ENCODE measurements at regions of chr6 and their contacts with region 1.

Region 1: GRCh38 chr6:135506270-135506997 is 8.9 kb upstream of the AHI1 start:
- DNase-seq: peak in 4 of 14 experiments; percentile 10 to 71 (median 66)
- ATAC-seq: peak; percentile 84
- H3K4me3 ChIP-seq: no peak overlapping the region
- H3K4me3 Mint-ChIP-seq: no peak overlapping the region
- H3K27ac ChIP-seq: no peak overlapping the region
- H3K27ac Mint-ChIP-seq: no peak overlapping the region
- H3K4me1 ChIP-seq: no peaks in the 10 kb centered on the region
- H3K4me1 Mint-ChIP-seq: no peaks in the 10 kb centered on the region
- H3K27me3 ChIP-seq: no peaks in the 10 kb centered on the region
- H3K27me3 Mint-ChIP-seq: no peaks in the 10 kb centered on the region
- CTCF ChIP-seq: peak; percentile 79

Region 2: GRCh38 chr6:135451693-135452092 is 54.7 kb before region 1 on chr6:
- CTCF ChIA-PET with region 1: no interaction called
- POLR2A ChIA-PET with region 1: no interaction called
- intact Hi-C with region 1: loop called in 1 of 2 experiments (anchors 5 kb)
- DNase-seq: peak in 3 of 14 experiments; percentile 42 to 66 (median 64)
- ATAC-seq: peak; percentile 54
- H3K4me3 ChIP-seq: no peak overlapping the region
- H3K4me3 Mint-ChIP-seq: no peak overlapping the region
- H3K27ac ChIP-seq: no peak overlapping the region
- H3K27ac Mint-ChIP-seq: no peak overlapping the region
- H3K4me1 ChIP-seq: no peaks in the 10 kb centered on the region
- H3K4me1 Mint-ChIP-seq: no peaks in the 10 kb centered on the region
- H3K27me3 ChIP-seq: no peaks in the 10 kb centered on the region
- H3K27me3 Mint-ChIP-seq: no peaks in the 10 kb centered on the region
- CTCF ChIP-seq: peak; percentile 86

Region 3: DNA sequence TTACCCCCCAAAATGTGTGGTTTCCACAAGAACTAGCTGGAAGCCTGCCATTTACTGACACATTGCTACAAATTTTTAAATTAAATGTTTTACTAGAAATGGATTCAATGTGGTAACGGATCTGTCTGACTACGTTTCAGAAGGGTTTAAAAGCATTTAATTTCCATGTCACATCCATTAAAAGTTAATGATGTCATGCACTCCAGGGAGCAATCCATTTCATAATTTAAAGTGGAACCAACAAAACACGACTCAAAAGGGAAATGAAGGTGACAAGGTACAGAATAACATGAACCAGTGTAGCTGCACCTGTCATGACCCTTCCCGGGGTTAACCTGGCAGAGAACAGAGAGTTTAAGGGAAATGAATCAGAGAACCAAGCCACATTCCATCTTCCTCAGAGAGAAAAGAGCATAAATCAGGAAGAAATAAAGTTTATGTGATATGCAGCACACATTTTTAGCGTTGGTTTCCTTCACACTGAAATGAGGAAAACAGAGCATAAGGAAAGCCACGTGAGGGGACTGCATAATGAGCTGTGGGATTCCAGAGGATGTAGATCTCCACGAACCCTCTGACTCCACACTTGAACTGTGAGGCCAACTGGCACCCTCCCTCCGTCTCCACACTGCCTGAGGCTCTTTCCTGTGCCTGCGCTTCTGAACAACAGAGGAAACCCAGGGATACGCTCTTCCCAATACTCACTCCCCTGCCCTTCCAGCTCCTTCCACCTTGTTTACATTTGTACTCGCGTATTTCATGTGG is 161.4 kb after region 1 on chr6:
- CTCF ChIA-PET with region 1: no interaction called
- POLR2A ChIA-PET with region 1: no interaction called
- intact Hi-C with region 1: no loop called
- DNase-seq: no peak
- ATAC-seq: no peak
- H3K4me3 ChIP-seq: no peak overlapping the region
- H3K4me3 Mint-ChIP-seq: no peak overlapping the region
- H3K27ac ChIP-seq: no peak overlapping the region
- H3K27ac Mint-ChIP-seq: no peak overlapping the region
- H3K4me1 ChIP-seq: no peaks in the 10 kb centered on the region
- H3K4me1 Mint-ChIP-seq: no peaks in the 10 kb centered on the region
- H3K27me3 ChIP-seq: no peaks in the 10 kb centered on the region
- H3K27me3 Mint-ChIP-seq: no peaks in the 10 kb centered on the region
- CTCF ChIP-seq: no peak

Region 4: DNA sequence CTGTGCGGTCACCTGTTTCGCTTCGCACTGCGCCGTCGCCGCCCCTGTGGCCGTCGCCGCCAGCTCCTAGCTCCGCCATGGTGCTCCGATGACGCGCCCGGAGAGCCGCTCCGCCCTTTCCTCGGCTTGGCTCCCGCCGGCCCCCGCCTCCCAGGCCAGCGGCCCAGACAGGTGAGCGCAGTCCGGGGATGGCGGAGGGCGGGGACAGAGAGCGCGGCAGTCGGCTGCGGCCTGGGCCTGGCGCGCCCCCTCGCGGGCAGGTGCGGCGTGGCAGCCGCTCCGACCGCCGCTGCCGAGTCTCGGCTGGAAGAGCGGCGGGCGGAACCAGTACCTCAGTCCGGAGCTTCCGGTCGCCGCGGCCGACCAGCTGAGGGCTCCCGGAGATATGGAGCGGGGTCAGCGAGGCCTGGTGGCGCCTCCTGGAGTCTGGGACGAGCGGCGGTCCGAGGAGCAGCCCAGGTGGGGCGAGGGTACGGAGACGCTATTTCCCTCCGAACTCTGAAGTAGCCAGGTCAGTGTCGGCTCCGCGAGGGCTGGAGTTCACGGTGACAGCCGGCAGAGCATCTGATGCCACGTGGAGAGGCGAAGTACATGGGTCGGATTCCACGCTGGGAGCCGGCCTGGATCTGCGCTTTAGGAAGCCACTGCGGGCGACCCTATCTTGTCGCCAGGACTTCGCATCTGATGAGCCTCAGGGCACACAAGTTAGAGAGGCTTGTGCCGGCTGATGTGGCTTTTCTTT is 1044.1 kb after region 1 on chr6 and contains the start of gene MAP7:
- CTCF ChIA-PET with region 1: no interaction called
- POLR2A ChIA-PET with region 1: no interaction called
- intact Hi-C with region 1: loop called in 1 of 2 experiments (anchors 10 kb)
- DNase-seq: peak; percentile 36 to 89 (median 59)
- ATAC-seq: peak; percentile 87
- H3K4me3 ChIP-seq: peak within 1 kb of the TSS; percentile 48
- H3K4me3 Mint-ChIP-seq: peak within 1 kb of the TSS; percentile 84
- H3K27ac ChIP-seq: no peak within 1 kb of the TSS
- H3K27ac Mint-ChIP-seq: no peak within 1 kb of the TSS
- H3K4me1 ChIP-seq: peaks cover 13% of the 10 kb centered on the region
- H3K4me1 Mint-ChIP-seq: peaks cover 14% of the 10 kb centered on the region
- H3K27me3 ChIP-seq: peaks cover 19 to 31% of the 10 kb centered on the region in 2 experiments
- H3K27me3 Mint-ChIP-seq: peaks cover 47% of the 10 kb centered on the region
- CTCF ChIP-seq: peak; percentile 91
- total RNA-seq, gene MAP7: 0.45 to 0.49 TPM